Activated naive CD8-positive, alpha-beta T cell treated with anti-CD3 and anti-CD28 coated beads, Interleukin-2, amount 10 ng/mL, durations not matched to agents 7 days and 5 days (primary cell): ENCODE measurements at regions of chr10 and their contacts with region 1.

Region 1: DNA sequence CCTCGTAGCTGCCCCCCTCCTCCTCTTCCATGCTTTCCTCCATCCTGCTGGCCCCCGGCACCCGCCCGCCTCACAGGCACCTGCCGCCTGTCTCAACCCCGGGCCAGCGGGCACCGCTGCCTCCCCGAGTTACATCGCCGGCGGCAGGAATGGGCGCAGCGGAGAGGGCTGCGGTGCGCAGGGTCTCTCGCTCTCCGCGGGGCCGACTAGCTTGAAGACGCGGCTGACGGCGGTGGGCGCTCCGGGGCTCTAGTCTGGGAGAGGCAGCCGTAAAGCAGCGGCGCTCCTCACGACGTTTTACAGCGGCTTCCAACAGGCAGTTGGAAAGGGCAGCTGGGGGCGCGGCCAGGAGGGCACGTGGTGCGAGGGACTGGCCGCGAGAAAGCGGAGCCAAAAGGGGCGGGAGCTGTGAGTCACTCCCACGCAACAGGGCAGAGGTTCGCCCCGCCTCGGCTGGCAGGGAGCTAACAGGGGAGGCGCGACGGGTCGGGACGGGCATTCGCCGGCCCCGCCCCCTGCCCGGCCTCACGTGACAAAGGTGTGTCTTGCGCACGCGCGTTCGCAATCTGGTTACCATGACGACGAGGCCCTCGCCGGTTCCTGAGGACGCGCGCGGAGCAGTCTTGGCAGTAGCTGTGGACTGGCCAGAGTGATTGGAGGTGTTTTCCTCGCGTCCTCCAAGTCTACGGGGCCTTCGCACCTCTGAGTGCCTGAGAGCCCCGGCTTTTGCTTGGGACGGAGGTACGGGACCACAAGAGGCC is at the start of gene CACUL1:
- DNase-seq: peak; percentile 99
- ATAC-seq: peak; percentile 99
- H3K4me3 Mint-ChIP-seq: peak within 1 kb of the TSS; percentile 86
- H3K27ac Mint-ChIP-seq: peak within 1 kb of the TSS; percentile 86
- H3K4me1 Mint-ChIP-seq: peaks cover 25% of the 10 kb centered on the region
- H3K27me3 Mint-ChIP-seq: peaks cover 12% of the 10 kb centered on the region
- total RNA-seq, gene CACUL1: 26.3 to 31.3 TPM

Region 2: DNA sequence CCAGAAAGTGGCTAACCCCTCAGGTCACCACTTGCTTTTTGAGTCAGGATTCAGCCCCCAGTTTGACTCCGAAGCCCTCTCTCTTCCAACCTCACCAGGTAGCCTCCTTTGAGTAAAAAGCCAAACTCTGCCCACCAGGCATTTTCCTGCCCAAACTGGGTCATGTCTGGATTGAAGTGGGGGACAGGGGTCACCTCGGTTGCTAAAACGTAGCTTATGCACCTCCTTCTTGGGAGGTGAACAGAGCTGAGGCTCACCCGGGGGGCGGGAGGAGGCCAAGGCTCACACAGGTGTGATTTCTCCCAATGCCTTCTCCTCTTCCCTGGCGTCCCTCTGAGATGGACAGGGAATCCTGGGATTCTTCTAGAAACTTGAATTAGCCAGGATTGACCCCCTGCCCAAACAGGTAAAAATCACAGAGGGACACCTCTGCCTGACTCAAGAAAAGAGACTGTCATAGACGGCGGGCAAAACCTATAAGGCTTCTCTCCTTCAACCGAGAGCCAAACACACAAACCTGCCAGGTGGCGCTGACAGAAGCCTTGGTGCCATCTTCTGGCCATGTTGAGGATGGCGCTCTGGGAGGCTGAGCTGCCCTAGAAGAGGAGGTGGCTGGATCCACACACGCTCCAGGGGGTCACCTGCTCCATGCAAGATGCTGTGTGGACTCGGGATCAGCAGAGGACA is 211.0 kb before region 1 on chr10:
- POLR2A ChIA-PET with region 1: no interaction called
- DNase-seq: peak; percentile 67
- ATAC-seq: peak; percentile 89
- H3K4me3 Mint-ChIP-seq: no peak overlapping the region
- H3K27ac Mint-ChIP-seq: no peak overlapping the region
- H3K4me1 Mint-ChIP-seq: peaks cover 6% of the 10 kb centered on the region
- H3K27me3 Mint-ChIP-seq: peaks cover 45% of the 10 kb centered on the region

Region 3: GRCh38 chr10:118729641-118730258 is 25.1 kb before region 1 on chr10:
- POLR2A ChIA-PET with region 1: interaction called, 35 read pairs
- DNase-seq: no peak
- ATAC-seq: peak; percentile 65
- H3K4me3 Mint-ChIP-seq: peak overlapping the region; percentile 26
- H3K27ac Mint-ChIP-seq: peak overlapping the region; percentile 66
- H3K4me1 Mint-ChIP-seq: peaks cover 46% of the 10 kb centered on the region
- H3K27me3 Mint-ChIP-seq: no peaks in the 10 kb centered on the region

Region 4: DNA sequence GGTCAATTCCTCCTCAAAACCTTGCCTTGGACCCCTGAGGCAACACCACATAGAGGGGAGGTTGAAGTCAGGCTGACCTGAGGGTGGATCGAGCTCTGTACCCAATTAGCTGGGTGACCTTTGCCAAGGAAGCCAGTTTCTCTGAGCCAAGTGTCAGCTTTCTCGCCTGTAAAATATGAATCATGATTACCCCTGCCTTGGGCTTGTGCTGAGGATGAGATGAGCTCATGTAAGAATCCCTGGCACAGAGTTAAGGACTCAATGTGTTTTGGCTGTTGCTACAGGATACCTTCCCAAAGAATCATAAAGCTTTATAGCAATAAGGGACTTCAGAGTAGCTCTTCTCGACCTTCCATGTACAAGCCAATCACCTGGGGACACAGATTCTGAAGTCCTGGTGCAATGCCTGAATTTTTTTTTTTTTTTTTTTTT is 43.3 kb after region 1 on chr10:
- POLR2A ChIA-PET with region 1: no interaction called
- DNase-seq: no peak
- ATAC-seq: no peak
- H3K4me3 Mint-ChIP-seq: no peak overlapping the region
- H3K27ac Mint-ChIP-seq: no peak overlapping the region
- H3K4me1 Mint-ChIP-seq: no peaks in the 10 kb centered on the region
- H3K27me3 Mint-ChIP-seq: peaks cover 24% of the 10 kb centered on the region

Region 5: GRCh38 chr10:118832241-118832651 is 77.3 kb after region 1 on chr10:
- POLR2A ChIA-PET with region 1: no interaction called
- DNase-seq: no peak
- ATAC-seq: no peak
- H3K4me3 Mint-ChIP-seq: peak overlapping the region; percentile 37
- H3K27ac Mint-ChIP-seq: no peak overlapping the region
- H3K4me1 Mint-ChIP-seq: peaks cover 9% of the 10 kb centered on the region
- H3K27me3 Mint-ChIP-seq: no peaks in the 10 kb centered on the region